Naive thymus-derived CD4-positive, alpha-beta T cell (primary cell): ENCODE measurements at regions of chr5 and their contacts with region 1.

Region 1: DNA sequence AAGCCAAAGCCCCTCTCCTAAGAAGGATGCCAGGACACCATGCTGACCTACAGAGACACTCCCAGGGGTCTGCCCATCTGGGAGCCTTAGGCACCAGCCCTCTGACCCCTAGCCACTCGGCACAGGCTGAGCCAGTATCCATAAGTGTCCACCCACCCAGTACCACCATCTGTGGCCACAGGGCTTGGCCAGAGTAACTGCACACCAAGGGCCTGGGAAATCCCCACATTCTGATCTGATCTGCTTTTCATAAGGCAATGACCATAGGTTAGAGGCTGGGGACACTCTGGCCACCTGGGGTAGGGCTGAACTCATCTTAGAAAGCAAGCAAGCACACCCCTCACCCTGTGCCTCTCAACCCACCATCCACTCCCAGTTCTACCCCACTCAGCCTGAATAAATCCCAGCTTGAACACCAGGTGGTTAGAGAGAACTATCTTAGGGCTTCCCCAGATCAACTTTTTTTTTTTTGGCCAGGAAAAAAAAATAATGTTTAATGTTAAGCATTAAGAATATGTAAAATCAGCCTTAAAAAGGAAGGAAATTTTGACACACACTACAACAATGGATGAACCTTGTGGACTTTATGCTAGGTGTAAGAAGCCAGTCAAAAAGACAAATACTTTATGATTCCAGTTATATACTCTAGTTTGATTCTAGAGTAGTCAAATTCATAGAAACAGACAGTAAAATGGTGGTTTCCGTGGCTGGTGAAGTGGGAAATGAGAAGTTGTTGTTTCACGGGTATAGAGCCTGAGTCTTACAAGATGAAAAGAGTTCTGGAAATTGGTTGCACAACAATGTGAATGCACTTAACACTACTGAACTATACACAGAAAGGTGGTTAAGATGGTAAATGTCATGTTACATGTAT is 6.2 kb downstream of the GNPDA1 start:
- DNase-seq: peak in 7 of 9 donors; percentile 27 to 73 (median 54)
- ATAC-seq: peak; percentile 82
- H3K4me3 ChIP-seq: no peak overlapping the region
- H3K4me3 Mint-ChIP-seq: peak overlapping the region; percentile 27 to 82 (median 54)
- H3K27ac ChIP-seq: peak overlapping the region; percentile 51
- H3K27ac Mint-ChIP-seq: peak overlapping the region; percentile 60 to 95 (median 89)
- H3K4me1 ChIP-seq: peaks cover 9 to 58% of the 10 kb centered on the region in 2 donors
- H3K4me1 Mint-ChIP-seq: peaks cover 39 to 81% (median 74%) of the 10 kb centered on the region in 7 donors
- H3K27me3 ChIP-seq: no peaks in the 10 kb centered on the region
- H3K27me3 Mint-ChIP-seq: no peaks in the 10 kb centered on the region

Region 2: DNA sequence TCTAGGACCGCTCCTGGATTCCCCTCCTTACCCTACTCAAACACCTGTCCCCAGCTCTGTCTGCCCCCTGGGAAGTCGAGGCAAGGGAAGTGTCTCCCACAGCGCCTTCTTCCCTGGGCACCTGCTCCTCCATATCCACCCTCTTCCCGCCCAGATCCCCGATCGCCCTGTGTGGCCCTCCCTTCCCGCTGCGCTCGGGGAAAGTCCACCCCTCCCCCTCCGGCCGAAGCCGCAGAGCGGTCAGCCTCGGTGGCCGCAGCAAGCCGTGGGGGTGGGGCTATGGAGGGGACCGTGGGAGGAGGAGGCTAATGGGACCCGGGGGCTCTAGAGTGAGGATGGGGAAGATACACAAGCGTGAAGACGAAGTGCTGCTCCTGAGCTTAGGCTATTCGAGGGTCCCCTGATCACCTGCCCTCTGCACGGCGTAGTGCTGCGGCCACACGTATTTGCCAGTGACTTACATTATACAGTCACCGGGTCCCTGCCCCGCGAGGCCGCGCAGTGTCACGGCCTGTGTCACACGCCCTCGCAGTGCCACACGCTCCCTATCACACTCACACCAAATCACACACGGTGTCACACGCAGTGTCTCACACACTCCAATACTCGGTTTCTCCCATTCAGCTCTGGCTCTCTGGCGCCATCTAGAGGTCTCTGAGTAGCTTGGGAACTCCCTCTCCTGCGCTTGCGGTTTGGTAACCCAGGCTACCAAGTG is 127.7 kb before region 1 on chr5:
- CTCF ChIA-PET with region 1: no interaction called
- POLR2A ChIA-PET with region 1: no interaction called
- intact Hi-C with region 1: no loop called
- DNase-seq: peak; percentile 73 to 94 (median 88)
- ATAC-seq: peak; percentile 92
- H3K4me3 ChIP-seq: peak overlapping the region; percentile 44
- H3K4me3 Mint-ChIP-seq: peak overlapping the region; percentile 77 to 91 (median 84)
- H3K27ac ChIP-seq: no peak overlapping the region
- H3K27ac Mint-ChIP-seq: peak overlapping the region in 5 of 9 donors; percentile 0 to 47 (median 11)
- H3K4me1 ChIP-seq: peaks cover 24 to 26% of the 10 kb centered on the region in 2 donors
- H3K4me1 Mint-ChIP-seq: peaks cover 20 to 33% (median 28%) of the 10 kb centered on the region in 7 donors
- H3K27me3 ChIP-seq: peaks cover 8 to 32% of the 10 kb centered on the region in 2 donors
- H3K27me3 Mint-ChIP-seq: peaks cover 66 to 88% (median 75%) of the 10 kb centered on the region in 5 donors

Region 3: GRCh38 chr5:142221091-142221860 is 214.7 kb after region 1 on chr5:
- CTCF ChIA-PET with region 1: no interaction called
- POLR2A ChIA-PET with region 1: no interaction called
- intact Hi-C with region 1: loop called (anchors 5 to 10 kb)
- DNase-seq: no peak
- ATAC-seq: no peak
- H3K4me3 ChIP-seq: no peak overlapping the region
- H3K4me3 Mint-ChIP-seq: peak overlapping the region in 3 of 10 donors; percentile 17 to 31 (median 19)
- H3K27ac ChIP-seq: no peak overlapping the region
- H3K27ac Mint-ChIP-seq: peak overlapping the region in 3 of 9 donors; percentile 3 to 52 (median 6)
- H3K4me1 ChIP-seq: peaks cover 6 to 25% of the 10 kb centered on the region in 2 donors
- H3K4me1 Mint-ChIP-seq: peaks cover 18 to 39% (median 34%) of the 10 kb centered on the region in 7 donors
- H3K27me3 ChIP-seq: no peaks in the 10 kb centered on the region
- H3K27me3 Mint-ChIP-seq: peaks cover 0 to 10% (median 0%) of the 10 kb centered on the region in 5 donors

Region 4: DNA sequence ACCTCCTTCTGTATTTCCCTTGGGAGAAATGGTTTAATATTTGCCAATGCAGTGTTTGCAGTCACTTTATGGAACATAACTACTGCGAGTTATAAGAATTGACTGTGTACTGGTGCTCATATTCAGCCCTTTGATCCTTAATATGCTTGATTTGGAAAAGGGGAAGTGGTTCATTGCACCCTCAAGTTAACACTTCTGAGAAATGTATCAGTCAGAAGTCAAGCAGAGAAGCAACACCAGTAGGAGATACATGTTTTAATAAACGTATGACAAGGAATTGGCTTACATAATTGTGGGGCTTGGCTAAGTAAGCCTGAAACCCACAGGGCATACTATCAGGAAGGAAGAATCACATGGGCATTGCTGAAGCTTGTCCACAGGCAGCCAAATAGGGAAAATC is 449.3 kb after region 1 on chr5:
- CTCF ChIA-PET with region 1: no interaction called
- POLR2A ChIA-PET with region 1: no interaction called
- intact Hi-C with region 1: no loop called
- DNase-seq: no peak
- ATAC-seq: no peak
- H3K4me3 ChIP-seq: no peak overlapping the region
- H3K4me3 Mint-ChIP-seq: no peak overlapping the region
- H3K27ac ChIP-seq: no peak overlapping the region
- H3K27ac Mint-ChIP-seq: no peak overlapping the region
- H3K4me1 ChIP-seq: peaks cover 0 to 4% of the 10 kb centered on the region in 2 donors
- H3K4me1 Mint-ChIP-seq: peaks cover 0 to 7% (median 0%) of the 10 kb centered on the region in 7 donors
- H3K27me3 ChIP-seq: no peaks in the 10 kb centered on the region
- H3K27me3 Mint-ChIP-seq: peaks cover 0 to 21% (median 0%) of the 10 kb centered on the region in 5 donors